Ascending aorta (tissue), 2 donors: ENCODE measurements at regions of chr15 and their contacts with region 1.

Region 1: DNA sequence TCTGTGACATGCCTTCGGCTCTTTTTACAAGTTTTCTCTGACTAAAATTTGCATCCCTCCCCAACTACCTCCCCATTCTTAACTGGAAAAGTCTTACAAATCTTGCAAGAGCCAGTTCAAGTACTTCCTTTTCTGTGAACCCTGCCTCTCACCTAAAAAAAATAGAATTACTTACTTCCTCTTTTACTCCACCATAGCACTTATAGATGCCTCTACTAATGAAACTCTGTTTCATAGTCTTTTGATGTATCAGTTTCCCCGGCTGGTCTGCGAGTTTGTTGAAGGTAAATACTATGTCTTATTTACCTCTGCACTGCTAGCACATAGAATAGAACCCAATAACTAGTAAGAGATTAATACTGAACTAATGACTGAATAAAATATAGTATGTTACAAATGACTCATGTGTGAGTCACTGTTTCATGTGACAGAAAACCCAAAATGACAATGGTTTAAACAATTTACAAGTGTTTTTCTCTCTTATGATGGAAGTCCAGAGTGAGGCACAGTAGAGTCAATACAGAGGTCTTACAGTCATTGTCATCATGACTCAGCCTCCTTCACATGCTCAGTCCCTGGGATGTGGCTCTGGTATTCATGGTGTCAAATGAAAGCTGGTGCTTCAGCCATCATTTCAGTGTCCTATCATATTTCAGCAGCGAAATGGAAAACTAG is 393.5 kb downstream of the RSL24D1 start:
- DNase-seq: no peak
- H3K4me3 ChIP-seq: no peak overlapping the region
- H3K27ac ChIP-seq: no peak overlapping the region
- H3K4me1 ChIP-seq: no peaks in the 10 kb centered on the region
- H3K27me3 ChIP-seq: no peaks in the 10 kb centered on the region
- CTCF ChIP-seq: no peak

Region 2: GRCh38 chr15:54859982-54860381 is 56.7 kb after region 1 on chr15:
- intact Hi-C with region 1: loop called (anchors 10 kb)
- DNase-seq: no peak
- H3K4me3 ChIP-seq: no peak overlapping the region
- H3K27ac ChIP-seq: no peak overlapping the region
- H3K4me1 ChIP-seq: no peaks in the 10 kb centered on the region
- H3K27me3 ChIP-seq: no peaks in the 10 kb centered on the region
- CTCF ChIP-seq: no peak